ENCODE measurements at regions of chr1 and their contacts with region 1.

Region 1: GRCh38 chr1:181021811-181022434 is 747 bp downstream of the STX6 start:
- DNase-seq: peak; percentile 26 to 79 (median 43)
- H3K4me3 ChIP-seq: peak overlapping the region; percentile 73 to 90
- H3K4me3 Mint-ChIP-seq: peak overlapping the region; percentile 95 to 98 (median 96)
- H3K27ac ChIP-seq: peak overlapping the region; percentile 75
- H3K27ac Mint-ChIP-seq: peak overlapping the region; percentile 93 to 100 (median 99)
- H3K4me1 ChIP-seq: peaks cover 51% of the 10 kb centered on the region
- H3K4me1 Mint-ChIP-seq: peaks cover 32 to 66% (median 41%) of the 10 kb centered on the region in 4 donors
- H3K27me3 ChIP-seq: no peaks in the 10 kb centered on the region
- H3K27me3 Mint-ChIP-seq: peaks cover 0 to 8% of the 10 kb centered on the region in 2 donors

Region 2: GRCh38 chr1:180502360-180503273 is 519.3 kb before region 1 on chr1 and contains the start of gene ACBD6:
- CTCF ChIA-PET with region 1: no interaction called
- POLR2A ChIA-PET with region 1: interaction called, 8 read pairs
- intact Hi-C with region 1: loop called (anchors 2 kb)
- DNase-seq: peak; percentile 86 to 91 (median 88)
- H3K4me3 ChIP-seq: peak within 1 kb of the TSS; percentile 89 to 95
- H3K4me3 Mint-ChIP-seq: peak within 1 kb of the TSS; percentile 96 to 99 (median 98)
- H3K27ac ChIP-seq: peak within 1 kb of the TSS; percentile 71
- H3K27ac Mint-ChIP-seq: peak within 1 kb of the TSS; percentile 92 to 99 (median 97)
- H3K4me1 ChIP-seq: peaks cover 42% of the 10 kb centered on the region
- H3K4me1 Mint-ChIP-seq: peaks cover 23 to 42% (median 31%) of the 10 kb centered on the region in 4 donors
- H3K27me3 ChIP-seq: no peaks in the 10 kb centered on the region
- H3K27me3 Mint-ChIP-seq: no peaks in the 10 kb centered on the region
- total RNA-seq, gene ACBD6: 55.1 to 64.2 TPM

Region 3: GRCh38 chr1:181062836-181063428 is 41.0 kb after region 1 on chr1:
- CTCF ChIA-PET with region 1: no interaction called
- POLR2A ChIA-PET with region 1: interaction called, 12 read pairs
- intact Hi-C with region 1: no loop called
- DNase-seq: peak in 4 of 5 donors; percentile 13 to 27 (median 19)
- H3K4me3 ChIP-seq: peak overlapping the region in 1 of 2 donors; percentile 33
- H3K4me3 Mint-ChIP-seq: peak overlapping the region; percentile 70 to 91 (median 76)
- H3K27ac ChIP-seq: peak overlapping the region; percentile 39
- H3K27ac Mint-ChIP-seq: peak overlapping the region; percentile 27 to 95 (median 87)
- H3K4me1 ChIP-seq: peaks cover 19% of the 10 kb centered on the region
- H3K4me1 Mint-ChIP-seq: peaks cover 18 to 24% (median 21%) of the 10 kb centered on the region in 4 donors
- H3K27me3 ChIP-seq: no peaks in the 10 kb centered on the region
- H3K27me3 Mint-ChIP-seq: no peaks in the 10 kb centered on the region

Region 4: DNA sequence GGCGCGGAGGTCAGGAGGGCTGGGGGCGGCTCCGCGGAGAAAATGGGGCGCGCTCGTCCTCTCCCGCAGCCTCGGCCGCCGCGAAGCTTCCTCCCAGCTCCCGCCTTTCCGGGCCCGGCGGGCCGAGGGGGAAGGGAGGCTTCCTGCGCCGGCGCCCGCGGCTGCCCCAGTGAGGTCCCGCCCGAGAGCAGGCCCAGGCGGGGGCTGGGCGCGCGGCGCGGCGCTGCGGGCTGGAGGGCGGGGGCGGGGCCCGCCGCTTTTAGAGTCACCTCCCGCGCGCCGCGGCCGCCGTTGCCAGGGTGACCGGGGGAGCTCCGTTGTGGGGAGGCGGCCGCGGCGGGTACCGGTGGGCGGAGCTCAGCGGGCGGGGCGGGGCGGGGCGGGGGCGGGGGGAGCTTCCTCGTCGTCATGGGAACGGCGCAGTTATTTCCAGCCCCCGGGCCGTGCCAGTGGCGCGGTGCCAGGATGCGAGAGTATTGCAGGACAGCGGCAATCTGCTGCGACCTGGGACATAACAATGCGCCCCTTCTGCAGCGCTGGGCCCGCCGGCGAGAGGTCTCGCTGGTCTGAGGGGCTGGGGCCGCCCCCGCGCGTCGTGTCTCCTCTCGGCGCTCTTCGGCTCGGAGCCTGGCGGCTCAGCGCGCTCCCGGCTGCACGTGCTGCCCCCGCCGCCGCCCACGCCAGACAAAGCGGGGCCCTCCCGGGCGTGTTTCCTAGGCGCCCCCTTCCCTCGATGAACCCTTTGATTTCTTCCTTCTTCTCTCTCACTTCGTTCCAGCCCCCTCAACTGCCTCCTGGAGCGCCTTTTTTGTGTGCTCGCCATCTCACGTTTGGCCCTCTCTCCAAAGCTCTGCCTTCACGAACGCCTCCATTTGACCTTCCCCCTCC is 83.5 kb after region 1 on chr1:
- CTCF ChIA-PET with region 1: interaction called, 4 read pairs
- POLR2A ChIA-PET with region 1: interaction called, 21 read pairs
- intact Hi-C with region 1: no loop called
- DNase-seq: peak; percentile 90 to 94 (median 91)
- H3K4me3 ChIP-seq: peak overlapping the region in 1 of 2 donors; percentile 76
- H3K4me3 Mint-ChIP-seq: peak overlapping the region; percentile 87 to 97 (median 90)
- H3K27ac ChIP-seq: peak overlapping the region; percentile 79
- H3K27ac Mint-ChIP-seq: peak overlapping the region; percentile 92 to 98 (median 96)
- H3K4me1 ChIP-seq: peaks cover 56% of the 10 kb centered on the region
- H3K4me1 Mint-ChIP-seq: peaks cover 33 to 71% (median 50%) of the 10 kb centered on the region in 4 donors
- H3K27me3 ChIP-seq: no peaks in the 10 kb centered on the region
- H3K27me3 Mint-ChIP-seq: no peaks in the 10 kb centered on the region

Region 5: DNA sequence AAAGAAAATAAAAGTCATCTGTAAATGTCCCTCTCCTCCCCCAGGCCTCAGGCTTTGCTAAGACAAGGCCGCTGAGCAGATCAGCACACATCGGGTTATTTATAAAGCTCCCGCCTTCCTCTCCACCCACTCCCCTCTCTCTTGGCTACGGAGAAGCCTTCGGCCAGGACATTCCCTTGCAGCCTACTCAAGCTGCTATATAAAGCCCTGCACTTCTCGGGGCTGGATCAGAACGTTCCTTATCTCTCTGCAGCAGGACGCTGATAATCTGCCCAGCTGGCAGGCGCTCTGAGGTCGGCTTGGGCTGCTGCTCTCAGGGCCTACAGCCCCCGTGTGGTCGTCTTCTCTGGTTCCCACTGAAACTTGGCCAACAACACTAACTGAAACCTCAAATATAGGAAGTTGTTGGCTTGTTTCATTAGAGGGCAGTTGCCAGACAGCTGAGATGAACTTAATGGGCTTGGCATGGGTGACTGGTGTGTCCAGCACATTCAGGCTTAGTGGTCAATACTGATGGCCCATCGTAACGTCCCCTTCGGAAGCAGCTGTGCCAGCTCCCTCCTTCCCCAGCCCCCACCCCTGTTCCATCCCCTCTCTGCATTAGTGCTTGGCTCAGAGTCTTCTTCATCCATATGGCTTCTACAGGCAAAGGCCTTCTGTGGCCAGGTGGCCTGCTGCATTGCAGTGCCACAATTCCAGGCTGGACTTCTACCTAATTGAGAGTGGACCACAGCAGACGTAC is 131.1 kb after region 1 on chr1:
- CTCF ChIA-PET with region 1: no interaction called
- POLR2A ChIA-PET with region 1: interaction called, 13 read pairs
- intact Hi-C with region 1: no loop called
- DNase-seq: no peak
- H3K4me3 ChIP-seq: no peak overlapping the region
- H3K4me3 Mint-ChIP-seq: no peak overlapping the region
- H3K27ac ChIP-seq: no peak overlapping the region
- H3K27ac Mint-ChIP-seq: peak overlapping the region in 2 of 7 donors; percentile 23 to 62
- H3K4me1 ChIP-seq: peaks cover 56% of the 10 kb centered on the region
- H3K4me1 Mint-ChIP-seq: peaks cover 37 to 61% (median 49%) of the 10 kb centered on the region in 4 donors
- H3K27me3 ChIP-seq: no peaks in the 10 kb centered on the region
- H3K27me3 Mint-ChIP-seq: no peaks in the 10 kb centered on the region

Region 6: DNA sequence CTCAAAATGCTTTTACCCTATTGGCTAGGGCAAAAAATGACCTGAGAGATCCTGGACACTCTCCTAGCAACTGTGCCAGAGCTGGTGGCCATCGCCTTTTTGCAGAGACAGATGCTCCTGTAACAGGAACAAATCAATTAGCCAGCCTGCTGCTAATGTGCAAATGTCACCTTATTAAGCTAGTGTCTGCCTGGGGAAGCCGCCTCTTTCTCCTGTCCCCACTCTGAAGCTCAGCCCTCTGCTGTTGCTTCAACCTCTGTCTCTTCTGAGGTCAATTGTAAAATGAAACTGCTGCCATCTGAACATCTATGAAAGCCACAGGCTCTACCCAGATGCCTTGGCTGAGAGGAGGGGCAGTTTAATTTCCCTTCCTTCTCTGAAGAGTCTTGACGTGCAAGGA is 375.9 kb after region 1 on chr1:
- CTCF ChIA-PET with region 1: no interaction called
- POLR2A ChIA-PET with region 1: interaction called, 4 read pairs
- intact Hi-C with region 1: loop called (anchors 5 kb)
- DNase-seq: peak; percentile 41 to 56 (median 50)
- H3K4me3 ChIP-seq: peak overlapping the region; percentile 13 to 25
- H3K4me3 Mint-ChIP-seq: peak overlapping the region; percentile 65 to 86 (median 74)
- H3K27ac ChIP-seq: peak overlapping the region; percentile 37
- H3K27ac Mint-ChIP-seq: peak overlapping the region in 5 of 7 donors; percentile 78 to 97 (median 95)
- H3K4me1 ChIP-seq: peaks cover 64% of the 10 kb centered on the region
- H3K4me1 Mint-ChIP-seq: peaks cover 9 to 35% (median 29%) of the 10 kb centered on the region in 4 donors
- H3K27me3 ChIP-seq: no peaks in the 10 kb centered on the region
- H3K27me3 Mint-ChIP-seq: no peaks in the 10 kb centered on the region

Region 7: GRCh38 chr1:181784039-181784683 is 762.2 kb after region 1 on chr1:
- CTCF ChIA-PET with region 1: no interaction called
- POLR2A ChIA-PET with region 1: no interaction called
- intact Hi-C with region 1: no loop called
- DNase-seq: no peak
- H3K4me3 ChIP-seq: no peak overlapping the region
- H3K4me3 Mint-ChIP-seq: no peak overlapping the region
- H3K27ac ChIP-seq: no peak overlapping the region
- H3K27ac Mint-ChIP-seq: no peak overlapping the region
- H3K4me1 ChIP-seq: no peaks in the 10 kb centered on the region
- H3K4me1 Mint-ChIP-seq: no peaks in the 10 kb centered on the region
- H3K27me3 ChIP-seq: no peaks in the 10 kb centered on the region
- H3K27me3 Mint-ChIP-seq: peaks cover 8 to 10% of the 10 kb centered on the region in 2 donors

Region 8: DNA sequence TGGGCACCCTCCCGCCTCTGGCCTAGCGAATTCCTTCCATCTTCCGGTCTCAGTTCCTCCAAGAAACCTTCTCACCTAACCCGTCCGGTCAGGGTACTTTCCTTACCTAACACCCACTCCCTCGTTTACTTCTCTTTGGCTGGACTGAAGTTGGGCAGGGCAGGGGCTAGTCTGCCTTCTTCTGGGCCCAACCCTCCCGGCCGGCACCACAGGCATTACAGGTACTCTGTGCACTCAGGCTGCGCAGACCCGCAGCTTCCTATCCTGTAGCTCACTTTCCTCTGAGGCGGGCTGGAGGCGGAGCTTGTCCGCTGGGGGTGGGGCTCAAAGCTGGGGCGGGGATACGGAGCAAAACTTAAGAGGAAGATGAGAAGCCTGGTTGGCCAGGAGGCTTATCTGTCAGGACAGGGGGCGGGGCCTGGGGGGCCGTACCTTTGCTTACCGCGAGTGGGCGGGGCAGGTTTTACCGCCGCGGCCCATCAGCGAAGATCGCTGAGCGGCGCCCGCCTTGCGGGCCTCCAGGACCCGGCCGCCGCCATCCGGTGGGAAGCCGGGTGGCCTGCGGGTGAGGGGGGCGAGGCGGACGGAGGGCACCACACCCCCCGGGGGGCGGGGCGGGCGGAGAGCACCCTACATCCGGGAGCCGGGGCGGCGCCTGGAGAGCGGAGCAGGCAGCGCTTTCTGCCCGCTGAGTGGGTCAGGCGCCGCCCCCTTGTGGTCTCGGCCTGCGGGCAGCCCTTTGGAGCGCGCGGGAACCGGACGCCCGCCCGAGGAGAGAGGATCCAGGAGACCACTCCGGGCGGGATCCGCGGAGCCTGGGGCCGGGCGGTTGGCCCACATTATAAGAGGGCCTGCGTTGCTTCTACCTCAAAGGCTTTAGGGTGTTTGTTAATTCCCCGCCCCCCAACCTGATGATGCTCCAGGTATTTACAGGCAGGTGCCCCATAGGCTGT is 1007.7 kb after region 1 on chr1:
- CTCF ChIA-PET with region 1: no interaction called
- POLR2A ChIA-PET with region 1: no interaction called
- intact Hi-C with region 1: loop called (anchors 5 kb)
- DNase-seq: peak; percentile 98
- H3K4me3 ChIP-seq: peak overlapping the region; percentile 92 to 94
- H3K4me3 Mint-ChIP-seq: peak overlapping the region; percentile 91 to 100 (median 96)
- H3K27ac ChIP-seq: peak overlapping the region; percentile 77
- H3K27ac Mint-ChIP-seq: peak overlapping the region; percentile 84 to 100 (median 99)
- H3K4me1 ChIP-seq: peaks cover 16% of the 10 kb centered on the region
- H3K4me1 Mint-ChIP-seq: peaks cover 14 to 21% (median 16%) of the 10 kb centered on the region in 4 donors
- H3K27me3 ChIP-seq: no peaks in the 10 kb centered on the region
- H3K27me3 Mint-ChIP-seq: no peaks in the 10 kb centered on the region

Measured in CD4-positive, alpha-beta memory T cell (primary cell).